Heart right ventricle (tissue), 16 donors: ENCODE measurements at regions of chr5 and their contacts with region 1.

Region 1: DNA sequence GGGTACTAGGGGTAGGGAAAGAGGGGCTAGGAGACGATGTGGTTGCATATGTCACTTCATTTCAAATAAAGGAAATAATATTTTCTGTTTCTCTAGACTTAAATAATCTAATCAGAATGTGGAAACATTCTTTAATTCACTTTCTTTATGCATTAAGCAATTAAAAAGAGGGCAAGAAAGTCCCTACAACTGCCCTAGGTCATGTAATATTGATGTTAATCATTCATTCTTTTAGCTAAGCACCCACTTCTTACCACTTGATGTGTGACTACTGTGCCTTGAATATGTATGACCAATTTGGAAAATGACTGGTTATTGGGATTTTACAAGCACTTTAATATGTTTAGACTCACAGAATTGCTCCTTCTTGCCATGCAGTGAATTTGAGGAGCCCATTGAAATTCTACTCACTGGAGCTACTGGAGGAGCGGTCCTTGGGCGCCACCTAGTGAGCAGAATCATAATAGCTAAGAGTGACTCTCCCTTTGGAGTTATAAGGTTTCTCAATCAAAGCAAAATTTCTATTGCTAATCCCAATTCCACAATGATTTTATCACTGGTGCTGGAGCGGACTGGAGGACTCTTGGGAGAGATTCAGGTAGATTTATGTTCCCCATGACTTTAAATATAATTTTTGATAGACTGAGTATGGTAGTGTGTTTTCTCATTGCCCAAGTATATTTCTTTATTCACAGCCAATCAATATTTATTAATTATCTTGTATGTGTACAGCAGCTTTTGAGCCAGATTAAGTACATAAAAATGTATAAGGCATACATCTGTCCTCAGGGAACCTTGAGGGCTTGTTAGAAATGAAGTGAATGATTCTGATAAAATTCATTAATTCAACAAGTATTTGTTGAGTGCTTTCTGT is 225.1 kb downstream of the ADGRV1 start:
- DNase-seq: peak; percentile 23 to 72
- ATAC-seq: peak in 4 of 8 donors; percentile 62 to 73 (median 69)
- H3K4me3 ChIP-seq: no peak overlapping the region
- H3K27ac ChIP-seq: no peak overlapping the region
- H3K4me1 ChIP-seq: no peaks in the 10 kb centered on the region
- H3K27me3 ChIP-seq: peaks cover 0 to 3% (median 0%) of the 10 kb centered on the region in 7 donors
- CTCF ChIP-seq: peak; percentile 79 to 94 (median 91)

Region 2: DNA sequence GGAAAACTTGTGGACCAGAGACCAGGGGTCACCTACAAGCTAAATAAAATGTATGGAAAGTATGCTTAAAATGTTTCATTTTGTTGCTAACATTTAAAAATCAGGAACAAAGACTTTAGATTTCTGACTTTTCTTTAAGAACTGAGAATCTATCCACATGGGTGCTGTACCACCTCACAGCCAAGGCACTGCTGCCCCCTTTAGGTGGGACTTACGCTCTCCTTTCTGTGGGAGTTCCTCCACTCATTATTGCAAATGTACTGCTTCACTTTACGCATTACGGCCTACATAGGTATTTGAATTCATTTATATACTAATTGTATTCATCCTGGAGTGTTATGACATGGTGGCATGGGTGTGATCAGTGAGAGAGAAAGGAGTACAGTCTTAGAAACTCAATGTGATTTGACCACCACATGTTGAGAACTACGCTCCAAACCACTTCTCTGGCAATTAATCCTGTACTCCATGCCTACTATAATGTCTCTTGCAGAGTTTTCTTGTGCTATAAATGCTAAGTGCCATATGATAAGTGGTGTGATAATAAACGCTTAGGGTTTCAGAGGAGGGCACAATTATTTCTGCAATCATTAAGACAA is 349.5 kb before region 1 on chr5:
- intact Hi-C with region 1: loop called in 7 of 10 experiments (anchors 1 to 10 kb)
- DNase-seq: no peak
- ATAC-seq: peak in 2 of 8 donors; percentile 45 to 48
- H3K4me3 ChIP-seq: no peak overlapping the region
- H3K27ac ChIP-seq: no peak overlapping the region
- H3K4me1 ChIP-seq: peaks cover 0 to 9% (median 4%) of the 10 kb centered on the region in 9 donors
- H3K27me3 ChIP-seq: no peaks in the 10 kb centered on the region
- CTCF ChIP-seq: peak; percentile 23 to 68 (median 59)

Region 3: GRCh38 chr5:90440644-90441043 is 343.1 kb before region 1 on chr5:
- intact Hi-C with region 1: loop called in 9 of 10 experiments (anchors 1 to 10 kb)
- DNase-seq: no peak
- ATAC-seq: no peak
- H3K4me3 ChIP-seq: peak overlapping the region in 1 of 10 donors; percentile 63
- H3K27ac ChIP-seq: no peak overlapping the region
- H3K4me1 ChIP-seq: peaks cover 0 to 14% (median 7%) of the 10 kb centered on the region in 9 donors
- H3K27me3 ChIP-seq: no peaks in the 10 kb centered on the region
- CTCF ChIP-seq: no peak

Region 4: DNA sequence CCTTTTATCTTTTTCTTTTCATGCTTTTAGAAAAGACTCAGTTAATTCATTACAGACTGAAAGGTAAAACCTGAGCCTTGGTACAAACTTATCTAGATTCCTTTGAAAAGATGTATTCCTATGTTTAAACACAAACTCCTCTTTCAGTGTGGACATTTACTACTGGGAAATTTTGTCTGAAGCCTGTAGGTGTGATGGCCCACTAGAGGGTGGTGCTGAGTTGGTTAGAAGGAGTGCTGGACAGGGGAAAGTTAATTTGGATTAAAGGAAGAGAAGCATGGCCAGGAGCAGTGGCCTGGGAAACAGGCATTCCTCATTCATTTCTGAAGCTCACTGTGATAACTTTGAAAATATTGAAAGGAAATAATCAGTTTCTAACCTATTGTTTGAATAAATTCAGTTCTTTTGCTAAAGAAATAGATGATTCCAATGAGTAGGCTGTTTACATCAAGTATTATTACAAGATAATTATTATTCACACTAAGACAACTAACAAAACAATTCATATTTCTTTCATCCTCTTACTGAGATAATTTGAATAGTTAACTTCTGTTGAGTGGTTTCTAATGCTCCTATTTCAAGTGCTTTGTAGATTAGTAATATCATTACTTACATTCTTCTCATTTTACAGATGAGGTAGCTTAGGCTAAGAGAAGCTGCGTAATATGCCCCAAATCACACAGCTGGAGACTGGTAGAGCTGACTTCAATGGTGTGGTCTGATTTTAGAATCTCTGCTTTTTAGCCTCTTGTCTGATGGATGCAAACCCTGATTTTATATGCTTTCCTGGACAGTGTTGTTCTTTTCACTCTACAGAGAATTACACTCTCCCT is 74.2 kb before region 1 on chr5:
- intact Hi-C with region 1: loop called in 1 of 10 experiments (anchors 5 kb)
- DNase-seq: peak in 1 of 2 donors; percentile 10
- ATAC-seq: no peak
- H3K4me3 ChIP-seq: no peak overlapping the region
- H3K27ac ChIP-seq: no peak overlapping the region
- H3K4me1 ChIP-seq: no peaks in the 10 kb centered on the region
- H3K27me3 ChIP-seq: peaks cover 0 to 18% (median 0%) of the 10 kb centered on the region in 7 donors
- CTCF ChIP-seq: peak in 8 of 9 donors; percentile 16 to 71 (median 59)

Region 5: GRCh38 chr5:90802474-90803317 is 19.0 kb after region 1 on chr5:
- intact Hi-C with region 1: no loop called
- DNase-seq: peak in 1 of 2 donors; percentile 8
- ATAC-seq: no peak
- H3K4me3 ChIP-seq: no peak overlapping the region
- H3K27ac ChIP-seq: no peak overlapping the region
- H3K4me1 ChIP-seq: peaks cover 0 to 12% (median 0%) of the 10 kb centered on the region in 9 donors
- H3K27me3 ChIP-seq: no peaks in the 10 kb centered on the region
- CTCF ChIP-seq: peak in 8 of 9 donors; percentile 29 to 72 (median 61)